ENCODE measurements at regions of chr9 and their contacts with region 1.

Region 1: DNA sequence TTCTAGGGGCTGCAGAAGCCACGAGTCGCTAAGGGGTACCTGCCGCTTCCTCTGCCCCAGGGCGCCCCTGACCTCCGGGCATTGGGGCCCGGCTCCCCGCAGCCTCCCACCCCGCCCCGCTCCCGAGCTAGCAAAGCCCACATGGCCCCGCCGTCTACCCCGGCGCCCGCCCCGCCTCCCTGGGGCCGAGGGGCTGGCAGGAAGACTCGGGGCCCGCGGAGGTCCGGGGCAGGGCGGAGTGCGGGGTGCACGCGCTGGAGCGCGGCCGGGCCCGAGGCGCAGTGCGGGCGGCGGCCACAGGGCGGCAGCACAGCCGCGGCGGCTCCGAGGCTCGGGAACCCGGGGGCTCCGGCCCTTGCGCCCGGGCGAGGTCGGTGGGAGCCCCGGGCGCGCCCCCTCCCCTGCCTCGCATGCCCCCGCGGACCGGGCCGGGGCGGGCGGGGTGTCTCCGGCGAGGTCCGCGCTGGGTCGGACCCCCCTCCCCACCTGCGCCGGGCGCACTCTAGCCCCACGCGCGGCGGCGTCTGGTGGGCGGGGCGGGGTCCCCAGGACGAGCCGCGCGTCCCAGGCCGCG is 6.7 kb downstream of the NRARP start:
- DNase-seq: no peak
- ATAC-seq: peak; percentile 68

Region 2: DNA sequence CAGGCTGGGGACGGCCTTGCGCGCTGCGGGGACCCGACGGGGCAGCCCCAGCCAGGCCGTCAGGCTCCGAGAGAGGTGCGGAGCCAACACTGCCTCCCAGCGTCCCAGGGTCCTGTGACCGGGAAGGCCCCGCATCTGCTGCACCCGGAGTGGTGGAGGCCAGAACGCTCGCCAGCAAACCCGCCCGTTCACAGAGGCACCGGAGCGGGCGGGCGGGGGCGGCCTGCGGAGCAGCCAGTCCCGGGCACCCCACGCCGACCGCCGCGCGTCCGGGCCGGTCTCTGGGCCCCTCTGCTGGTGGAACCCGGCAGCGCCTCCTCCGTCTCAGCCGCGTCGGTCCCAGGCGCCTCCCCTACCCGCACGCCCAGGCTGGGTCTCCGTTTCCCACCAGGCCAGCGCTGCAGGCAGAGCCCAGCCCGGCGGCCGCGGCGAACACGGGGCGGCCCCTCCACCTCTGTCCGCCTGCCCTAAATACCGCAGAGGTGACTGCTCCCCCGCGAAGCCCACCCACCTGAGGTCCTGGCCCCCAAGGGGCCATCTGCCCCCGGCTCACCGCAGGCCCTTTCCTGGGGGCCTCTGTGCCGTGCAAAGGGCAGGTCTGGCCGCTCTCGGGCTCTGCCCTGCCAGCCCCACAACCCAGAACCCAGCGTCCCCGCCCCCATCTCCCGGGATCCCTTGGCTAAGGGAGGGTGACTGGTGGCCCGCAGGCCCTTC is 111.7 kb after region 1 on chr9:
- intact Hi-C with region 1: loop called (anchors 5 kb)
- DNase-seq: peak; percentile 78
- ATAC-seq: peak; percentile 90

Region 3: GRCh38 chr9:137445275-137445807 is 150.0 kb after region 1 on chr9:
- intact Hi-C with region 1: loop called (anchors 10 kb)
- DNase-seq: peak; percentile 87
- ATAC-seq: peak; percentile 77

Region 4: DNA sequence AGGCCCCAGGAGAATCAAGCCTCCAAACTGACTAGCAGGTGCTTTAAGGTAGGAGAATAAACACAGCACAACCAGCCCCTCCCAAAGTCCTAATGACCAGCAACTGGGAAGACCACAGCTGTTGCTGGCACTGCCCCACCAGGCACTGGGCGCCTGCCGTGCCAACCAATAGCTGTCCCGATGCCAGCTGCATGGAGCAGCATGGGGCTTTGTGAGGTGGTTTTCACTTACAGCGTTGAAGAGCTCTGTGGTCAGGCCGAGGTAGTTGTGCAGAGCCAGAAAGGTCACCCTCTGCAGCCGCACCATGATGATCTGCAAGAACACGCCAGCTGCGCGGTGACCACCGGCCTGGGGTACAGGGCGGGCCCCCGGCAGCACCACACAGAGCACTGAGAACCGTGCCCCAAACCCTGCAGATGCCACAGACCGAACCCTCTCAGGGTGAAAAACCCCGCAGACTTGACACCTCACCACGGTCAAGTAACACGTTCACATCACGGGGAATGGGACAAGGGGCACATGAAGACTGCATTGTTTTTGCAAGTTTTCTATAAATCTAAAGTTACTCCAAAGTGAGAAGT is 226.2 kb after region 1 on chr9:
- intact Hi-C with region 1: loop called (anchors 10 kb)
- DNase-seq: no peak
- ATAC-seq: no peak

Measured in Right ventricle myocardium superior (tissue), 1 donor.